ENCODE measurements at regions of chr10 and their contacts with region 1.

Region 1: DNA sequence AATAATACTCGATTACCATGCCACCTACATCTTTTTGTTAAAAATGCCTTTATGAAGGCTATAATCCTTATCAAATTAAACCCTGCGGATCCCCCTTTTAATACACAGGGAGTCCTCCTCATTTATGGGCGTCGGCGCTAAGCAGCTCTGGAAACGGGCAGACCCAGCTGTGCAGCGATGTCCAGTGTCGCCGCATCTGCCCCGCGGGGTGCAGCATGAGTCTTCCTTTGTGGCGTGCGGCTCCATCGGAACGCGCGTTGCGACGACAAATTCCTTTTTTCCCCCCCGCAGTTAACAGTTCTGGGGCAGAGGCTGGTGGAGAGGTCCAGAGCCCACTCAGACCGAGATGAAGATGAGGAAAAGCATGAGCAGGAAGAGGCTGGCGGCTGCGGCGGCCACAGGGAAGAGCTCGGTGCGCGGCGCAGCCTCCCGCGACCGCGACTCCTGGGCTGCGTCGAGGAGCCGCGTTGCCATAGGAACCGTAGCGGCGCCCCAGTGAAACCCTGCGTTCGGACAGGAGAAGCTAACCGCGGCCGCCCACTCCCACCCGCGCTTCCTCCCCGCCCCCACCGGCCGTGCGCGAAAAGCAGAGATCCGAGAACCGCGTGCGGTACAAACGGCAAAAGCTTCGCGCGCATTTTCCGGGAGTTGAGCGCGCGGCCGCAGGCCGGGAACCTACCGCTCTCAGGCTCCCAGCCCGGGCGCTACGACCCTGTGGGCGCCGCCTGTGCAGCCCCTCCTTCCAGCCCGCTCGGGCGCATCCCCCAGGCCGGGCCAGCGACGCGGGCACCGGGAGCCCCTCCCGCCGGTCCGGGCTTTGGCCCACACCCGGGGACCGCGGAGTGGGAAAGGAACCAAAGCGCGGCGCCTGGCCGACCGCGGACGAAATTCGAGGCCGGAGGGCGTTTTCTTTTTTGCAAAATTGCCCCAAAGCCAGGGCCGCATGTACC is 130.6 kb downstream of the SPAG6 start:
- DNase-seq: no peak
- H3K4me3 Mint-ChIP-seq: peak overlapping the region; percentile 83
- H3K27ac Mint-ChIP-seq: peak overlapping the region; percentile 28
- H3K4me1 Mint-ChIP-seq: peaks cover 6% of the 10 kb centered on the region
- H3K27me3 Mint-ChIP-seq: peaks cover 57% of the 10 kb centered on the region

Region 2: DNA sequence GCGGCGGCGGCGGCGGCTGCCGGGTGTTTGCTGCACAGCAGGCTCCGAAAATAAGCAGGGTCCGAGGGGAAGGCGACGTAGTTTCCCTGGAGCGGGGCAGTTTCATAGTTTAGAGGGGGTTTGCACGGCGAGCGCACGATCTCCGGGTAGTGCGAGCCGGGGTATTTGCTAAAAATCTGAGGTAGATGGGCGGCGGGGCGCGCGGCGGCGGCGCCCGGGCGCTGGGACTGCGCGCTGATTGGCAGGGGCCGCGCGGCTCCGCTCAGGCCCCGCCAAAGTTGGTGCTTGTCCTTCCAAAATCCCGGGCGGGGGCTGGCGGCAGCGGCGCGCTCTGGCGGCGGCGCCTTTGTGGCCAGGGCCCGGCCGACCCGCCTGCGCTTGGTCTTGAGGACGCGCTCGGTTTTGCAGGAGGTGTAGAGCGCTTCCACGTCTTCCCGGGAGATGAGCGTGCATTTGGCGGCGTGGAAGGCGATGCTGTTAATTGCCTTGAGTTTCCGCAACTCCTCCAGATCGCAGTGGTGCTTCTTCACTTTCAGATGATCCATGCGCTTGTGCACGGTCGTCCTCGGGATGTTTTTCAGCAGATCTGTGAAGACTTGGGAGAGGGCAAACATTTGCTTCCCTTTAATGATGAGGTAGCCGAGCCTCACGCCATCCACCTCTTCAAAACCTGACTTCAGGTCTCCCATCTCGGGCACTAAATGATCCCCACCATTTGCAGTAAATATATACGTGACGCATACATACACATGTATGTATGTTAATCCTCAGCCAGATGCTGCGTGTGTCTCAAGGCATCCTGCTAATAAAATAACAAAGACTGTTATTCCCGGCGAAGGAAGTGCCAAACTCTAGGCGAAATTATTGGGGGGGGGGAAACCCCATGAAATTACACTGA is 958.5 kb before region 1 on chr10:
- intact Hi-C with region 1: loop called (anchors 10 kb)
- DNase-seq: no peak
- H3K4me3 Mint-ChIP-seq: peak overlapping the region; percentile 65
- H3K27ac Mint-ChIP-seq: no peak overlapping the region
- H3K4me1 Mint-ChIP-seq: peaks cover 39% of the 10 kb centered on the region
- H3K27me3 Mint-ChIP-seq: peaks cover 64% of the 10 kb centered on the region

Region 3: GRCh38 chr10:22505911-22506685 is 30.2 kb after region 1 on chr10:
- intact Hi-C with region 1: no loop called
- DNase-seq: no peak
- H3K4me3 Mint-ChIP-seq: no peak overlapping the region
- H3K27ac Mint-ChIP-seq: no peak overlapping the region
- H3K4me1 Mint-ChIP-seq: peaks cover 12% of the 10 kb centered on the region
- H3K27me3 Mint-ChIP-seq: peaks cover 26% of the 10 kb centered on the region